ENCODE measurements at regions of chr19 and their contacts with region 1.

Region 1: GRCh38 chr19:5803752-5804515 is 933 bp upstream of the NRTN start:
- DNase-seq: peak; percentile 99
- H3K4me3 ChIP-seq: peak overlapping the region; percentile 30 to 56; a peak in 3 of 4 replicates
- H3K27ac ChIP-seq: no peak overlapping the region
- H3K4me1 ChIP-seq: peaks cover 3 to 32% of the 10 kb centered on the region in 2 experiments; a peak in 1 of 4 replicates
- H3K27me3 ChIP-seq: peaks cover 6% of the 10 kb centered on the region; the same call in 1 of the 2 replicates
- CTCF ChIP-seq: peak; percentile 96
- EP300 ChIP-seq: peak in 1 of 2 experiments; percentile 5; a peak in 1 of 4 replicates
- RAD21 ChIP-seq: peak; percentile 81

Region 2: GRCh38 chr19:5680437-5681368 is 123.2 kb before region 1 on chr19 and contains the starts of genes HSD11B1L and MICOS13:
- CTCF ChIA-PET with region 1: no interaction called
- POLR2A ChIA-PET with region 1: no interaction called
- DNase-seq: peak; percentile 99
- H3K4me3 ChIP-seq: peak within 1 kb of the TSS; percentile 81 to 85
- H3K27ac ChIP-seq: peak within 1 kb of the TSS; percentile 74 to 94; a peak in 3 of 4 replicates
- H3K4me1 ChIP-seq: peaks cover 4 to 21% of the 10 kb centered on the region in 2 experiments; a peak in 1 of 4 replicates
- H3K27me3 ChIP-seq: no peaks in the 10 kb centered on the region
- CTCF ChIP-seq: no peak
- EP300 ChIP-seq: no peak
- RAD21 ChIP-seq: no peak
- polyA plus RNA-seq, gene HSD11B1L: 52.0 and 53.3 TPM in 2 replicates
- polyA plus RNA-seq, gene MICOS13: 112 and 116 TPM in 2 replicates

Region 3: GRCh38 chr19:5814852-5815246 is 10.9 kb after region 1 on chr19:
- CTCF ChIA-PET with region 1: interaction called, 38 read pairs
- POLR2A ChIA-PET with region 1: interaction called, 3 read pairs
- DNase-seq: no peak
- H3K4me3 ChIP-seq: no peak overlapping the region
- H3K27ac ChIP-seq: no peak overlapping the region
- H3K4me1 ChIP-seq: no peaks in the 10 kb centered on the region
- H3K27me3 ChIP-seq: peaks cover 23% of the 10 kb centered on the region; the same call in 1 of the 2 replicates
- CTCF ChIP-seq: no peak
- EP300 ChIP-seq: no peak
- RAD21 ChIP-seq: no peak

Region 4: GRCh38 chr19:5891938-5892771 is 88.2 kb after region 1 on chr19:
- CTCF ChIA-PET with region 1: interaction called, 73 read pairs
- POLR2A ChIA-PET with region 1: interaction called, 5 read pairs
- DNase-seq: peak; percentile 83
- H3K4me3 ChIP-seq: no peak overlapping the region; a peak in 1 of 4 replicates
- H3K27ac ChIP-seq: no peak overlapping the region; a peak in 1 of 4 replicates
- H3K4me1 ChIP-seq: peaks cover 0 to 44% of the 10 kb centered on the region in 2 experiments; a peak in 1 of 4 replicates
- H3K27me3 ChIP-seq: no peaks in the 10 kb centered on the region
- CTCF ChIP-seq: peak; percentile 70
- EP300 ChIP-seq: no peak
- RAD21 ChIP-seq: peak; percentile 70

Region 5: DNA sequence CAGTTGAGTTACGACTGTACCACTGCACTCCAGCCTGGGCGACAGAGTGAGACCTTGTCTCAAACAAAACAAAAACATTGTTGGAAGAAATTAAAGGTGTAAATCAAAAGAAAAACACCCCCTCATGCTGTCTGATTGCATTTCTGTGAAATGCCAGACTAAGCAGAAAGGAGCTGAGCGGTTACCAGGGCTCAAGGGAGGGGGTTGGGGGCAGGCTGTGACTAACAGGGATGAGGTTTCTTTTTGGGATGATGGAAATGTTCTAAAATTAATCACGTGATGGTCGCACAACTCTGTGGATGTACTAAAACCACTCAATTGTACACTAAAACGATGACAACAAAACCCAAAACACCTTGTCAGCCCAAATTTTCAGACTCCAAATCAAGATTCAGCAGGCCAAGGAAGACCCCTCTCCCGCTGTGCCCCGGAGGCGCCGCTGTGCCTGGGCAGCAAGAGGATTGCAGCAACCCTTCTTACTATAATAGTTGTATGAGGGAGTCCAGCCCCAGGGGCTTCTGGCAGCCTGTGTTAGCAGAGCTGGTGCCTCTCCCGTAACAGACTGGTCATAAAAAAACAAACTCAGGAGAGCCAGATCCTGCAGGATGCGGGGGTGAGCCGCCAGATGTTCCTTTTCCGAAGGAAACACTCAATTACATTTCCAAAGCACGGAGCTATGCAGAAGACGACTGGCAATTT is 131.0 kb after region 1 on chr19:
- CTCF ChIA-PET with region 1: interaction called, 11 read pairs
- POLR2A ChIA-PET with region 1: no interaction called
- DNase-seq: peak; percentile 91
- H3K4me3 ChIP-seq: no peak overlapping the region
- H3K27ac ChIP-seq: peak overlapping the region; percentile 45 to 94
- H3K4me1 ChIP-seq: peaks cover 13 to 67% of the 10 kb centered on the region in 2 experiments
- H3K27me3 ChIP-seq: no peaks in the 10 kb centered on the region
- CTCF ChIP-seq: no peak
- EP300 ChIP-seq: peak in 1 of 2 experiments; percentile 75; a peak in 1 of 4 replicates
- RAD21 ChIP-seq: no peak

Region 6: DNA sequence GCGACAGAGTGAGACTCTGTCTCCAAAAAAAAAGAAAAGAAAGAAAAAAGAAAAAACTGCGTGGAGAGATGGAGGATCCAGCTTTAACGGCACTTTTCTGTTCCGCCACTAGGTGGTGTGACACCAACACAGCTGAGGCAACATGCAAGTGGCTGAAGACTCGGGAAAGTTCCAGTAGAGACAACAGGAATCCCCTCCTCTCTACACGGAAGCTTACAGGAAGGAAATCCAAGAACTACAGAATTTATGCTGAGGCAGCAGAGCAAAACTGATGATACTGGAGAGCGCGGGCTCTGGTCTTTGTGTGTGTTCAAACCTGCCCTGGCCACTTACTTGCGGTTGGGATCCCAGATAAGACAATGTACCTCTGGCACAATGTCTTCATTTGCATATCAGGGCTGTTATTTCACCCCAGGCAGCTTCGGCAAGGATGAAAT is 164.1 kb after region 1 on chr19:
- CTCF ChIA-PET with region 1: interaction called, 26 read pairs
- POLR2A ChIA-PET with region 1: no interaction called
- DNase-seq: peak; percentile 79
- H3K4me3 ChIP-seq: no peak overlapping the region
- H3K27ac ChIP-seq: peak overlapping the region in 1 of 2 experiments; percentile 73; a peak in 2 of 4 replicates
- H3K4me1 ChIP-seq: peaks cover 0 to 25% of the 10 kb centered on the region in 2 experiments; a peak in 1 of 4 replicates
- H3K27me3 ChIP-seq: no peaks in the 10 kb centered on the region
- CTCF ChIP-seq: peak; percentile 88
- EP300 ChIP-seq: peak in 1 of 2 experiments; percentile 62; a peak in 2 of 4 replicates
- RAD21 ChIP-seq: peak; percentile 66

Region 7: GRCh38 chr19:5993648-5994358 is 189.9 kb after region 1 on chr19:
- CTCF ChIA-PET with region 1: interaction called, 20 read pairs
- POLR2A ChIA-PET with region 1: no interaction called
- DNase-seq: peak; percentile 93
- H3K4me3 ChIP-seq: no peak overlapping the region
- H3K27ac ChIP-seq: peak overlapping the region in 1 of 2 experiments; percentile 94; a peak in 2 of 4 replicates
- H3K4me1 ChIP-seq: peaks cover 0 to 32% of the 10 kb centered on the region in 2 experiments; a peak in 2 of 4 replicates
- H3K27me3 ChIP-seq: no peaks in the 10 kb centered on the region
- CTCF ChIP-seq: no peak
- EP300 ChIP-seq: peak in 1 of 2 experiments; percentile 84; a peak in 2 of 4 replicates
- RAD21 ChIP-seq: 0 out of 2 replicates have a peak, but pooled peaks have one; percentile 1

Measured in SK-N-SH (cell line).